Tibial artery (tissue), 4 donors: ENCODE measurements at regions of chr10 and their contacts with region 1.

Region 1: GRCh38 chr10:43689955-43690771 is 41.5 kb upstream of the ZNF32 start:
- DNase-seq: peak; percentile 78 to 92
- H3K4me3 ChIP-seq: peak overlapping the region; percentile 58 to 65
- H3K27ac ChIP-seq: peak overlapping the region; percentile 68 to 92
- H3K4me1 ChIP-seq: peaks cover 0 to 26% (median 12%) of the 10 kb centered on the region in 4 donors
- H3K27me3 ChIP-seq: no peaks in the 10 kb centered on the region
- CTCF ChIP-seq: peak; percentile 84 to 96

Region 2: GRCh38 chr10:44046605-44047004 is 356.4 kb after region 1 on chr10:
- intact Hi-C with region 1: loop called (anchors 10 kb)
- DNase-seq: no peak
- H3K4me3 ChIP-seq: no peak overlapping the region
- H3K27ac ChIP-seq: no peak overlapping the region
- H3K4me1 ChIP-seq: peaks cover 0 to 19% (median 8%) of the 10 kb centered on the region in 4 donors
- H3K27me3 ChIP-seq: no peaks in the 10 kb centered on the region
- CTCF ChIP-seq: peak; percentile 25 to 36

Region 3: DNA sequence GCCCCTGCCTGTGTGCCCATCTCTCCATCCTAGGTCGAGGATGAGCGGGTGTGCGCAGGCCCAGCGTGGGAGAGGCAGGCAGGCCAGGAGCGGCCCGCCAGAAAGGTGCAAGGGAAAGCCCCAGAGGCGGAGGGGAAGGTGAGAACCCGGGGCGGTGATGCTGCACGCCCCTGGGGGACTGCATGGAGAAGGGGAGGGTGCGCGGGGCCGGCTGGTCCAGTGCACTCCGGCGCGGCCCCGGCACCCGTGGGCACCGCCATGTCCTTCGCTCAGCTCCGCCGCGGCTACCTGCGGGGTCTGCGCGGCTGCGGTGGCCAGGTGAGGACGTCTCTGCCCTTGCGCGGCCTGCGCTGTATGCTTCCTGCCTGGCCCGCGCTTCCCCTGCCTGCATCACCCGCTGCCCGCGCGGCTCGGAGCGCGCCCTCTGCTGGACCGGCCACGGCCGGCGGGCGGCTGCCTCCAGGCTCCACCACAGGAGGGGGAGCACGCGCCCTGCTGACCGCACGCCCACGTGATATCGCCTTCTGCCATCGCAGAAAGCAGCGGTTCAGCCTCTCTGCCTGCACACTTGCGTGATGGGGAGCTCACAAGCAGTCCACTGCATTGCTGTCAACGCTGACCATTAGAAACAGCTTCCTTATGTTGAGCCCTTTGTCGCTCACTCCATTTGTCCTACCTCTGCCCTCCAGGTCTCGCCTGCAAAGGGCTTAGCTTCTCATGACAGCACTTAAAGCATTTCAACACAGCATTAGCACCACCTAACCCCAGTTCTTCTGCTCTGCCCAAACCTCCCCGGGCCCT is 620.8 kb after region 1 on chr10:
- intact Hi-C with region 1: loop called (anchors 2 kb)
- DNase-seq: peak; percentile 84 to 92
- H3K4me3 ChIP-seq: peak overlapping the region; percentile 25 to 47
- H3K27ac ChIP-seq: no peak overlapping the region
- H3K4me1 ChIP-seq: peaks cover 0 to 16% (median 11%) of the 10 kb centered on the region in 4 donors
- H3K27me3 ChIP-seq: no peaks in the 10 kb centered on the region
- CTCF ChIP-seq: peak; percentile 93 to 95